B cell (primary cell): ENCODE measurements at regions of chr11 and their contacts with region 1.

Region 1: GRCh38 chr11:118956094-118956846 is at the start of gene UPK2:
- DNase-seq: peak; percentile 89
- ATAC-seq: peak; percentile 99
- H3K4me3 ChIP-seq: no peak within 1 kb of the TSS
- H3K4me3 Mint-ChIP-seq: no peak within 1 kb of the TSS
- H3K27ac ChIP-seq: no peak within 1 kb of the TSS
- H3K27ac Mint-ChIP-seq: peak within 1 kb of the TSS; percentile 53
- H3K4me1 ChIP-seq: peaks cover 0 to 6% of the 10 kb centered on the region in 2 donors
- H3K4me1 Mint-ChIP-seq: peaks cover 5% of the 10 kb centered on the region
- H3K27me3 ChIP-seq: peaks cover 0 to 13% (median 0%) of the 10 kb centered on the region in 4 experiments
- H3K27me3 Mint-ChIP-seq: peaks cover 22% of the 10 kb centered on the region
- CTCF ChIP-seq: peak; percentile 94
- total RNA-seq, gene UPK2: not detected in 2 replicates

Region 2: DNA sequence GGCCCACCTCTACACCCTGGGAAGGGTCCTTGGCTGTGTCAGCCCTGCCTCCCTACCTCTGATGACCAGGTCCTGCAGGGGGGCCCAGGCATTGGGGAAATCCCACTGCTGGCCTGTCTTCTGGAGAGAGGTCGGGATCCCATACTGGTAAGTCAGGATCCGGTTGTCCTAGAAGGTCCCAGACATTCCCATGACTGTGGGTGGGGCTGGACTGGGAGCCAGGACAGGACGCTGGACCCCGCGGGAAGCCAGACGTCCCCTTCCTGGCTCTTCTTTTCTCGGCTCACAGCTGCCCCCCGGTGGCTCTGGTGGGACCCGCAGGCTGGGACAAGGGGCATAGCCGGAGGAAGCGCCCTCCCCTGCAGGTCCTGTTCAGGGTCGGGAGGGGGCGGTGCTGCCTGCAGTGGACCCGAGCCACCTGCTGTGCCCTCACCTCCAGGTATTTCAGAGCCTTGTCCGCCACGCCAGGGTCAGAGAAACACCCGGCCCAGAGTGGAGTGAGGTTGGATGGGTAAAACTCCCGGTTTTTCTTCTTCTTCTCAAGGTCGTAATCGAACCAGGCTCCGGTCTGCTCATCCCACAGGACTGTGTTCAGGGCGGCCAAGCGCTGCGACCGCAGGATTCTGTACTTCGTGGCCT is 296.8 kb before region 1 on chr11:
- CTCF ChIA-PET with region 1: interaction called, 3 read pairs
- POLR2A ChIA-PET with region 1: no interaction called
- intact Hi-C with region 1: loop called (anchors 1 kb)
- DNase-seq: peak; percentile 84
- ATAC-seq: peak; percentile 100
- H3K4me3 ChIP-seq: no peak overlapping the region
- H3K4me3 Mint-ChIP-seq: no peak overlapping the region
- H3K27ac ChIP-seq: no peak overlapping the region
- H3K27ac Mint-ChIP-seq: no peak overlapping the region
- H3K4me1 ChIP-seq: peaks cover 4 to 10% of the 10 kb centered on the region in 2 donors
- H3K4me1 Mint-ChIP-seq: peaks cover 4% of the 10 kb centered on the region
- H3K27me3 ChIP-seq: peaks cover 0 to 14% (median 0%) of the 10 kb centered on the region in 4 experiments
- H3K27me3 Mint-ChIP-seq: peaks cover 7% of the 10 kb centered on the region
- CTCF ChIP-seq: peak; percentile 99

Region 3: GRCh38 chr11:118689851-118690552 is 266.3 kb before region 1 on chr11:
- CTCF ChIA-PET with region 1: interaction called, 52 read pairs
- POLR2A ChIA-PET with region 1: no interaction called
- intact Hi-C with region 1: no loop called
- DNase-seq: peak; percentile 88
- ATAC-seq: peak; percentile 94
- H3K4me3 ChIP-seq: peak overlapping the region in 4 of 5 experiments; percentile 36 to 67 (median 52)
- H3K4me3 Mint-ChIP-seq: peak overlapping the region; percentile 85
- H3K27ac ChIP-seq: peak overlapping the region in 1 of 2 donors; percentile 51
- H3K27ac Mint-ChIP-seq: peak overlapping the region; percentile 68
- H3K4me1 ChIP-seq: peaks cover 10 to 27% of the 10 kb centered on the region in 2 donors
- H3K4me1 Mint-ChIP-seq: peaks cover 20% of the 10 kb centered on the region
- H3K27me3 ChIP-seq: peaks cover 0 to 4% (median 0%) of the 10 kb centered on the region in 4 experiments
- H3K27me3 Mint-ChIP-seq: peaks cover 10% of the 10 kb centered on the region
- CTCF ChIP-seq: peak; percentile 96